HEK293 (cell line): ENCODE measurements at regions of chr11 and their contacts with region 1.

Region 1: GRCh38 chr11:85694386-85694980 is 8.5 kb upstream of the CCDC89 start:
- H3K4me3 ChIP-seq: no peak overlapping the region
- H3K27ac ChIP-seq: no peak overlapping the region
- H3K4me1 ChIP-seq: no peaks in the 10 kb centered on the region
- CTCF ChIP-seq: no peak

Region 2: GRCh38 chr11:85182441-85183387 is 511.8 kb before region 1 on chr11:
- CTCF ChIA-PET with region 1: no interaction called
- POLR2A ChIA-PET with region 1: no interaction called
- H3K4me3 ChIP-seq: no peak overlapping the region
- H3K27ac ChIP-seq: no peak overlapping the region
- H3K4me1 ChIP-seq: no peaks in the 10 kb centered on the region
- CTCF ChIP-seq: no peak

Region 3: GRCh38 chr11:85656777-85657176 is 37.7 kb before region 1 on chr11:
- CTCF ChIA-PET with region 1: no interaction called
- POLR2A ChIA-PET with region 1: no interaction called
- H3K4me3 ChIP-seq: no peak overlapping the region
- H3K27ac ChIP-seq: no peak overlapping the region
- H3K4me1 ChIP-seq: no peaks in the 10 kb centered on the region
- CTCF ChIP-seq: no peak

Region 4: GRCh38 chr11:85682330-85683305 is 11.9 kb before region 1 on chr11:
- CTCF ChIA-PET with region 1: interaction called, 14 read pairs
- POLR2A ChIA-PET with region 1: no interaction called
- H3K4me3 ChIP-seq: peak overlapping the region; percentile 50
- H3K27ac ChIP-seq: peak overlapping the region; percentile 47; the same call in 1 of the 2 replicates
- H3K4me1 ChIP-seq: no peaks in the 10 kb centered on the region
- CTCF ChIP-seq: no peak